ENCODE measurements at regions of chrX and their contacts with region 1.

Region 1: DNA sequence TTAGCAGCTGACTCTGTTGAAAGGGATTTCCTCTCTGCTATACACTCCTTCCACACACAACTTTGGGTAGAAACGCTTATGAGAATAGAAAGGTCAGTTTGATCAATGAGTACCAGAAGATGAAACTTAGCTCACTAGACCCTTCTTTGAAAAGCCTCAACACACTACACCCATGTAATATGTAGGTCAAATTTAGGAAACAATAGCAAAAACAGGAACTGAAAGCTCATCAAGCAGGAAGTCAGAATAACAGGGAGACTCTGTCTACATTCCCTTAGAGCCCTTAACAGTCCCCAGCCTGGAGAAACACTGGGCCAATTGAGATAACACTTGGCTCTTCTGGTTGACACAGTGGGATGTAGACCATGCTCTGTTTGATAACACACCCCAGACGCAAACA is 30.7 kb downstream of the SRPX2 start:
- DNase-seq: no peak
- H3K4me3 ChIP-seq: no peak overlapping the region
- H3K27me3 ChIP-seq: no peaks in the 10 kb centered on the region
- CTCF ChIP-seq: no peak

Region 2: GRCh38 chrX:100447654-100448397 is 226.9 kb before region 1 on chrX:
- CTCF ChIA-PET with region 1: no interaction called
- POLR2A ChIA-PET with region 1: no interaction called
- DNase-seq: no peak
- H3K4me3 ChIP-seq: no peak overlapping the region
- H3K27me3 ChIP-seq: no peaks in the 10 kb centered on the region
- CTCF ChIP-seq: peak; percentile 73

Region 3: DNA sequence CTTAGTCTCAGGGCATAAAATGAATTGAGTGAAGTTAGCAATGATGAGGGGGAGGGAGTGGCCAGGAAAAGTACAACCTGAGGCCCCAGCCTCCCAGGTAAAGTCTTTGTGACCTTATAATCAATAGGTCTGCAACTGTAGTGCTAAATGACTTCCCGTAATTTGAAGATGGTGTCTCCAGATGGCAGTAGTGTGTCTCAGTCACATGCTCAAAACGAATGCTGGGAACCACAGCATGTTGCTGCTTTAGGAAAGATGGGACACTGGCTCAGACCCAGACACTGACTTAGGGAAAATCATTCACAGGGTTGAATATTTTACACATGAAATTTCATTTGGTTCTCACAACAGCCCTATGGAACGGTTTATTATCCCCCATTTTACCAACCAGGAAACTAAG is 20.4 kb before region 1 on chrX:
- CTCF ChIA-PET with region 1: interaction called, 14 read pairs
- POLR2A ChIA-PET with region 1: no interaction called
- DNase-seq: no peak
- H3K4me3 ChIP-seq: no peak overlapping the region
- H3K27me3 ChIP-seq: no peaks in the 10 kb centered on the region
- CTCF ChIP-seq: peak; percentile 24; the same call in 1 of the 2 replicates

Region 4: DNA sequence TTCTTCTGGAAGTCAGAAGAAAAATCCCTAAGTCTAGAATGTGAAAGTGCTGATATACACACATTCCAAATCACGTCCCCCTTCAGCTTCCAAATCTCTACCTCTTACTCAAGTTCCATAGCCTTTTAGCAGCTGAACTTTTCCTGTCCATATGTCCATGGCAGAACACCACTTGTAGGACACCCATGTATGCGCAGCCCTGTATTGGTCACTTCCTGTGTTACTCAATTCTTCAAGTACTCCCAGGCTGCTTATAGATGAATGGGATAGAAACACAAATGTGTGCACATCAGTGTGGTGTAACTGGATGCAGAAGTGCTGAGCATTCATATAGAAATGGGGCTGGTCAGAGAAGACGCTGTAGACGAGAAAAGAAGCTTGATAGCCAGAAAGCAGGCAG is 11.9 kb before region 1 on chrX:
- CTCF ChIA-PET with region 1: interaction called, 11 read pairs
- POLR2A ChIA-PET with region 1: no interaction called
- DNase-seq: no peak
- H3K4me3 ChIP-seq: no peak overlapping the region
- H3K27me3 ChIP-seq: no peaks in the 10 kb centered on the region
- CTCF ChIP-seq: no peak

Region 5: DNA sequence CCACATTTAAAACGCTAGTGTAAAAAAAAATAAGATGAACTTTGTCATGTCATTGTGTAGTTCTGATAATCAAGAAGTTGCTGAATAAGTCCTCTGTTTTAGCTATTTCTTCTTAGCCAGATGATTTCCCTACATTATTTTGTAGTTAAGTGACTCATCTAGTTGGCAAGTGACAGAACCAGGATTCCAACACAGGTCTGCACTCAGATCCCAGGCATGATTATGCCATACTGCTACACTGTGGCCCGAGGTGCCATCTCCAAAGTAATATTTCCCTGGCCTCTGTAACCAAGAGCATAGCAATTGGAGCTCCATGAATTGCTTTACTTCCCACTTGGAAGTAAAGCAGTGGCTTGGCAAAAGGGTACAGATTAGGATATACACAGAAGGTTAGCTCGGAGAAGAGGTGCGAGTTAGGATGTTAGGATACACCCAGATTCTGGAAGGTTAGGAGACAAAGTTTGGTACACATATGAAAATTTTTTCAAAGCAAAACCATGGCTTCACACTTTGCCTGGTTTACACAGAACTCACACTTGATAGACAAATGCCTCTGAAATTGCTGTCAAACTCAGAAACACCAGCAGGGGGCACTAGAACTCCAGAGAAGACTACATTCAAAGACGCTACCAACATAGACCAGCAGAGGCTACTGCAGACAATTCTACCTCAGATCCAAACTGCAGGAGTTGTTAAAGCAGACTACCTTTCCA is 10.7 kb after region 1 on chrX:
- CTCF ChIA-PET with region 1: interaction called, 33 read pairs
- POLR2A ChIA-PET with region 1: no interaction called
- DNase-seq: no peak
- H3K4me3 ChIP-seq: no peak overlapping the region
- H3K27me3 ChIP-seq: no peaks in the 10 kb centered on the region
- CTCF ChIP-seq: peak; percentile 72